ENCODE measurements at regions of chr3 and their contacts with region 1.

Region 1: GRCh38 chr3:39718674-39719595 is 90.5 kb upstream of the MYRIP start:
- DNase-seq: no peak
- ATAC-seq: no peak
- H3K4me3 ChIP-seq: no peak overlapping the region
- H3K27ac ChIP-seq: no peak overlapping the region
- H3K4me1 ChIP-seq: no peaks in the 10 kb centered on the region
- H3K27me3 ChIP-seq: no peaks in the 10 kb centered on the region
- CTCF ChIP-seq: no peak

Region 2: DNA sequence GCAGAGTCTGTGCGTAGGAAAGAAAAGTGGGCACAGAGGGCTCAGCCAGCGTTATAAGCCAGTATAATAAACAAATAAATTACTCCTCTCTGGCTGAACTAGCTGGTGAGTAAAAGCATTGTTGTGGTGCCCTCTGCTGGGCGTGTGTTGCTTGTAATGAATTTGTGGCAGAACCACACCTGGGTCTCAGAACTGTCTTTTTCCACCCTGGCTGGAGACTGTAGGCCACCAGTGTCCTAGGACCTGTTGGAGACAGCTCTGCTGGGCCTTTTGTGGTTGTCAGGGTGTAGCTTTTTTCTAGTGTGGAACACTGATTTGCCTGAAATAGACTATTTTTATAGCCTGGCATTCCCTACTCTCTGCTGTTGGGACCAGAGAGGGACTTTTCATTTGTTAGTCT is 460.1 kb after region 1 on chr3:
- intact Hi-C with region 1: loop called (anchors 10 kb)
- DNase-seq: peak; percentile 71
- ATAC-seq: peak; percentile 42 to 72
- H3K4me3 ChIP-seq: no peak overlapping the region
- H3K27ac ChIP-seq: no peak overlapping the region
- H3K4me1 ChIP-seq: no peaks in the 10 kb centered on the region
- H3K27me3 ChIP-seq: no peaks in the 10 kb centered on the region
- CTCF ChIP-seq: peak; percentile 85

Measured in lower lobe of right lung (tissue), 2 donors.